ENCODE measurements at regions of chr10 and their contacts with region 1.

Region 1: GRCh38 chr10:17023386-17024298 is 106.0 kb downstream of the CUBN start:
- DNase-seq: peak; percentile 83
- H3K4me3 Mint-ChIP-seq: peak overlapping the region; percentile 55
- H3K27ac Mint-ChIP-seq: peak overlapping the region; percentile 97
- H3K4me1 Mint-ChIP-seq: peaks cover 57% of the 10 kb centered on the region
- H3K27me3 Mint-ChIP-seq: peaks cover 5% of the 10 kb centered on the region

Region 2: DNA sequence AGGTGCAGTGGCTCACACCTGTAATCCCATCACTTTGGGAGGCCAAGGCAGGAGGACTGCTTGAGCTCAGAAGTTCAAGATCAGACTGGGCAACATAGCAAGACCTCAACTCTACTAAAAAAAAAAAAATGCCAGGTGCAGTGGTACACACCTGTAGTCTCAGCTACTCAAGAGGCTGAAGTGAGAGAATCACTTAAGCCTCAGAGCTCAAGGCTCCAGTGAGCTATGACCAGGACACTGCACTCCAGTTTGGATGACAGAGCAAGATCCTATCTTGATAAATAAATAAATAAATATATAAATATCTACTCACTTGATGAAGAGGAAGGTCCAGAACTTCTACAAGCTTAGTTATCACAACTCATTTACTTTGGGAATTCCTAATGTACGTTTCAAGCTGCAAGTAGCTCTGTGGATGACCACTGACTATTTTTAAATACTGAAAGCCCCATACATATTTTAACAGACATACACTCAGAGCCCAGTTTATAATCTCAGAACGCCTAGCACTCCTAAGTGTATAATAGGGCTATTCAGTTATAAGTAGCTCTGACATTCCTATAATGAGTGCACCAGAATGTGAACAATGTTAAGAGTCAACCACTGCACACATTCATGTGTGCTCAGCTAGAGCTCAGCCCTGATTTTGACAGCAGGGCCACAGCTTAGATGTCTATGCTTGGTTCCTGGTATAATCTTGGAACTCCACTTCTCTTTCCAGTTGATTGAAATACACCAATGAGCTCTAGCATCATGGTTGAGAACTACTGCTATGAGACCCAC is 13.1 kb before region 1 on chr10:
- CTCF ChIA-PET with region 1: no interaction called
- POLR2A ChIA-PET with region 1: interaction called, 11 read pairs
- DNase-seq: no peak
- H3K4me3 Mint-ChIP-seq: no peak overlapping the region
- H3K27ac Mint-ChIP-seq: no peak overlapping the region
- H3K4me1 Mint-ChIP-seq: peaks cover 11% of the 10 kb centered on the region
- H3K27me3 Mint-ChIP-seq: peaks cover 17% of the 10 kb centered on the region

Region 3: GRCh38 chr10:17144757-17145156 is 121.1 kb after region 1 on chr10:
- CTCF ChIA-PET with region 1: no interaction called
- POLR2A ChIA-PET with region 1: no interaction called
- DNase-seq: peak; percentile 51
- H3K4me3 Mint-ChIP-seq: no peak overlapping the region
- H3K27ac Mint-ChIP-seq: no peak overlapping the region
- H3K4me1 Mint-ChIP-seq: peaks cover 16% of the 10 kb centered on the region
- H3K27me3 Mint-ChIP-seq: no peaks in the 10 kb centered on the region

Region 4: DNA sequence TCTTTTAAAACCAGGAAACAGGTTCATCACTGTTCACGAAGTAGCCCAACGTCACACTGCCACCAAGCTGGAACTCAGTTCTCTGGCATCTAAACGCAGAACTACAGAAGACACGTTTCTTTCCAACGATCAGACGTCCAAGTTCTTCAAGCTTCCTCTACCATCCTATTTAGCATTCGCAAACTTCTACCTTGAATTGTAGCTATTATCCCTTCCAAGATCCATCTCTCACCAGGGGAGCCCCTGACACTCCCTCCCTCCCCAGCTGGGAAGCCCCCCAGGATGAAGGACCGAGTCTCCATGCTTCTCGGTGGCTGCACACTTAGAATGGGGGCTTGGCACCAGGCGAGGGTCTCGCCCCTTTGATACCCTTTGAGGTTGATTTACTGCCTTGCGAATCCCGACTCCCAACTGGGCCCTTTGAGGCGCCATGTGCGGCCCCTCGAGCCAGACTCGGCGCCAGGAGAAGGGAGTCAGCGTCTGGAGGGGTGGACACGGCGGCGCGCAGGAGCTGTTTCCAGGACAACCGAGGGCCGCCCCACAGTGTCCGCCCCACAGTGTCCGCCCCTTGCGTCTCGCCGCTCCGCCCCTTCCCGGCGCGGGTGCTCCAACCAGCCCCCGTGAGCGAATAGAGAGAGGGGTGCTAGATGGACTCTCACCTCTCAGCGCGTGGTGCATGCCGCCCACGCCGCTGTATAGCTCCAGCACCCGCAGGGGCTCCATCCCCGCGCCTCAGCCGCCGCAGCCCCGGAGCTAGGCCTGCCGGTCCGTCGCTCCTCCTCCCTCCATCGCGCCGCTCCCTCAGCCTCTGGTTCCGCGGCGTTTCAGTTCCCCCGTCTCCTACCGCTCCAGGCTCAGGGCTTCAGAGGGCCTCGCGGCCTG is 177.5 kb after region 1 on chr10 and contains the start of gene TRDMT1:
- CTCF ChIA-PET with region 1: no interaction called
- POLR2A ChIA-PET with region 1: interaction called, 23 read pairs
- DNase-seq: peak; percentile 77
- H3K4me3 Mint-ChIP-seq: peak within 1 kb of the TSS; percentile 92
- H3K27ac Mint-ChIP-seq: peak within 1 kb of the TSS; percentile 80
- H3K4me1 Mint-ChIP-seq: peaks cover 57% of the 10 kb centered on the region
- H3K27me3 Mint-ChIP-seq: no peaks in the 10 kb centered on the region
- total RNA-seq, gene TRDMT1: 12.3 to 12.7 TPM